Esophagus muscularis mucosa (tissue), 4 donors: ENCODE measurements at regions of chr19 and their contacts with region 1.

Region 1: DNA sequence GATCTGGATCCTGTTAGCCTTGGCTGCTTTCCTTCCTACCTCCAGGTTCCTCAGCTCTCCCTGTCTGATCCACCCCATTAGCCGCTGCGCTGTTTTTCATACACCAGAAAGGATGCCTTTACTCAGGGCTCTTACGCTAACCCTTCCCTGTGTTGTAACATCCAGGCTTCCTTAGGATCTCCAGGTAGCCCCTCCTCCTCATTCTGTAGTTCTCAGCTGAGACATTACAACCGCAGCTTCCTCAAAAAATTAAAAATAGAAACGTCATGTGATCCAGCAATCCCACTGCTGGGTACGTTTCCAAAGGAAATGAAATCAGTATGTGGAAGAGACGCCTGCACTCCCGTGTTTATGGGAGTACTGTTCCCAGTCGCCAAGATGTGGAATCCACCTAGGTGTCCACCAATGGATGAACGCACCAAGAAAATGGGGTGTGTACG is 18.4 kb upstream of the MYADM start:
- DNase-seq: no peak
- H3K4me3 ChIP-seq: no peak overlapping the region
- H3K27ac ChIP-seq: peak overlapping the region in 3 of 4 donors; percentile 41 to 60 (median 45)
- H3K4me1 ChIP-seq: peaks cover 0 to 11% (median 6%) of the 10 kb centered on the region in 4 donors
- H3K27me3 ChIP-seq: peaks cover 0 to 49% (median 3%) of the 10 kb centered on the region in 4 donors
- CTCF ChIP-seq: no peak
- EP300 ChIP-seq: no peak
- POLR2A ChIP-seq: no peak

Region 2: GRCh38 chr19:53879140-53880081 is 30.2 kb after region 1 on chr19:
- intact Hi-C with region 1: loop called (anchors 5 kb)
- DNase-seq: peak; percentile 96
- H3K4me3 ChIP-seq: peak overlapping the region; percentile 49 to 62 (median 52)
- H3K27ac ChIP-seq: no peak overlapping the region
- H3K4me1 ChIP-seq: peaks cover 28 to 72% (median 54%) of the 10 kb centered on the region in 4 donors
- H3K27me3 ChIP-seq: peaks cover 4 to 50% (median 30%) of the 10 kb centered on the region in 4 donors
- CTCF ChIP-seq: peak in 1 of 3 experiments; percentile 8
- EP300 ChIP-seq: no peak
- POLR2A ChIP-seq: no peak

Region 3: GRCh38 chr19:53906211-53907192 is 57.2 kb after region 1 on chr19:
- intact Hi-C with region 1: loop called (anchors 10 kb)
- DNase-seq: no peak
- H3K4me3 ChIP-seq: peak overlapping the region in 1 of 4 donors; percentile 6
- H3K27ac ChIP-seq: no peak overlapping the region
- H3K4me1 ChIP-seq: peaks cover 8 to 38% (median 33%) of the 10 kb centered on the region in 4 donors
- H3K27me3 ChIP-seq: peaks cover 0 to 98% (median 47%) of the 10 kb centered on the region in 4 donors
- CTCF ChIP-seq: peak; percentile 54 to 96 (median 73)
- EP300 ChIP-seq: no peak
- POLR2A ChIP-seq: no peak